ENCODE measurements at regions of chr1 and their contacts with region 1.

Region 1: GRCh38 chr1:10530281-10530740 is 55.6 kb downstream of the PEX14 start:
- DNase-seq: peak; percentile 40
- H3K4me3 ChIP-seq: peak overlapping the region; percentile 6
- CTCF ChIP-seq: peak; percentile 87

Region 2: GRCh38 chr1:10430216-10431069 is 99.9 kb before region 1 on chr1 and contains the start of gene CENPS:
- in situ Hi-C with region 1: no loop called
- DNase-seq: peak; percentile 77
- H3K4me3 ChIP-seq: peak within 1 kb of the TSS; percentile 62
- CTCF ChIP-seq: peak; percentile 81

Region 3: GRCh38 chr1:10835423-10836421 is 305.4 kb after region 1 on chr1:
- in situ Hi-C with region 1: loop called (anchors 25 kb)
- DNase-seq: peak; percentile 12
- H3K4me3 ChIP-seq: no peak overlapping the region
- CTCF ChIP-seq: no peak

Region 4: DNA sequence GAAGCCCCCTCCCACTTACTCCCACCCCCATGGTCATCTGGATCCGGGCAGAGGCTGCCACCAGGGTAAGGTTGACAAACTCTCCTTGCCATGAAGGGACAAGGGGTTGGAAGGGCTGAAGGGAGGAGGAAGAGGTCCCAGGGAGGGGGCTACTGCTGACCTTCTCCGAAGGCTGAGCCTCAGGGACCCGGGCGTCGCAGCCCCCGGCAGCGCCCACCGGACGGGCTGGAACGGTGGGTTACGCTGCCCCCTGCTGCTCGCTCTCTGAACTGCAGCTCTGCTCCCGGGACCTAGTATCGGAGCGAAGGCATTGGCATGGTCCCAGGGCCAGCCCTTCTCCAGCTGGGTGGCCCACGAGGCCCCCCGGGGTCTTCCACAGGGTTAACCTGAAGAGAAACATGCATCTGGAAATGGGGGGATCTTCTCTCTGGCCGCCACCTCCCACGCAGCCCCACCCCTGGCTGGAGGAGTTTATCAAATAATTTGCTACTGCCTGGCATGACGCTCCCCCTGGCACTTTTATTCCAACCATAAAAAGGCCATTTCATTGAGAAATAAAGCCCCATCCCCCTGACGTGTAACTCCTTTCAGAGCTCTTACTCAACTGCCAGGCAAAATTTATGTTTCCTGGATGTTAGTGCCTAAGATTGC is 411.7 kb after region 1 on chr1:
- in situ Hi-C with region 1: loop called (anchors 10 kb)
- DNase-seq: no peak
- H3K4me3 ChIP-seq: no peak overlapping the region
- CTCF ChIP-seq: peak; percentile 94